PC-3 (cell line): ENCODE measurements at regions of chr5 and their contacts with region 1.

Region 1: GRCh38 chr5:136018814-136019783 is 9.7 kb upstream of the TGFBI start:
- DNase-seq: no peak
- ATAC-seq: no peak
- H3K4me3 ChIP-seq: no peak overlapping the region
- H3K27ac ChIP-seq: no peak overlapping the region
- H3K4me1 ChIP-seq: peaks cover 42% of the 10 kb centered on the region
- H3K27me3 ChIP-seq: no peaks in the 10 kb centered on the region
- CTCF ChIP-seq: no peak

Region 2: GRCh38 chr5:135950611-135951010 is 68.5 kb before region 1 on chr5:
- CTCF ChIA-PET with region 1: no interaction called
- POLR2A ChIA-PET with region 1: no interaction called
- intact Hi-C with region 1: no loop called
- DNase-seq: no peak
- ATAC-seq: no peak
- H3K4me3 ChIP-seq: no peak overlapping the region
- H3K27ac ChIP-seq: no peak overlapping the region
- H3K4me1 ChIP-seq: no peaks in the 10 kb centered on the region
- H3K27me3 ChIP-seq: no peaks in the 10 kb centered on the region
- CTCF ChIP-seq: no peak

Region 3: GRCh38 chr5:136053336-136054141 is 34.4 kb after region 1 on chr5:
- CTCF ChIA-PET with region 1: no interaction called
- POLR2A ChIA-PET with region 1: no interaction called
- intact Hi-C with region 1: loop called (anchors 5 kb)
- DNase-seq: peak; percentile 94
- ATAC-seq: peak; percentile 86
- H3K4me3 ChIP-seq: no peak overlapping the region
- H3K27ac ChIP-seq: peak overlapping the region; percentile 85
- H3K4me1 ChIP-seq: peaks cover 38% of the 10 kb centered on the region
- H3K27me3 ChIP-seq: no peaks in the 10 kb centered on the region
- CTCF ChIP-seq: no peak

Region 4: GRCh38 chr5:136103118-136103517 is 84.0 kb after region 1 on chr5:
- CTCF ChIA-PET with region 1: no interaction called
- POLR2A ChIA-PET with region 1: no interaction called
- intact Hi-C with region 1: no loop called
- DNase-seq: no peak
- ATAC-seq: no peak
- H3K4me3 ChIP-seq: no peak overlapping the region
- H3K27ac ChIP-seq: no peak overlapping the region
- H3K4me1 ChIP-seq: no peaks in the 10 kb centered on the region
- H3K27me3 ChIP-seq: no peaks in the 10 kb centered on the region
- CTCF ChIP-seq: no peak